Right cardiac atrium (tissue), 5 donors: ENCODE measurements at regions of chr5 and their contacts with region 1.

Region 1: GRCh38 chr5:142874537-142874936 is 104.4 kb downstream of the ARHGAP26 start:
- DNase-seq: peak; percentile 92 to 94 (median 94)
- ATAC-seq: peak; percentile 80 to 88
- H3K4me3 ChIP-seq: no peak overlapping the region
- H3K27ac ChIP-seq: peak overlapping the region; percentile 17
- H3K4me1 ChIP-seq: peaks cover 30% of the 10 kb centered on the region
- H3K27me3 ChIP-seq: no peaks in the 10 kb centered on the region

Region 2: DNA sequence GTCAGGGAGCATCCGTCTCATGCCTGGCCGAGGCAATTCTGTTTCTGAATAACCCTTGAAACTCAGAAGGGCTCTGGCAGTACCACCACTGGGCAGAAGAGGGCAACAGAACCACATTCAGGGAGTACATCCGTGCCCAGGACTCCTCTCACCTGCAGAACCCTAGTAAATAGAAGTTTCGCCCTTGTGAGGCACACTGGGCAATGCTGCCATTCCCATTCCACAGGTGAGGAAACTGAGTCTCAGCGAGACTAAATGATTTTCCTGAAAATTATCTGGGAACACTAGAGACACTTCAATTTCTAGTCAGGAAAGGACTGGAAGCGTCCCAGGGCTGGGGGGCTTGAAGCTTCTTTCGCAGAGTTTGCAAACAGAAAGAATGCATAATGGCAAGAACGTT is 263.4 kb before region 1 on chr5:
- intact Hi-C with region 1: loop called in 1 of 4 experiments (anchors 10 kb)
- DNase-seq: peak; percentile 73 to 89 (median 83)
- ATAC-seq: peak; percentile 80 to 86
- H3K4me3 ChIP-seq: no peak overlapping the region
- H3K27ac ChIP-seq: no peak overlapping the region
- H3K4me1 ChIP-seq: no peaks in the 10 kb centered on the region
- H3K27me3 ChIP-seq: no peaks in the 10 kb centered on the region

Region 3: DNA sequence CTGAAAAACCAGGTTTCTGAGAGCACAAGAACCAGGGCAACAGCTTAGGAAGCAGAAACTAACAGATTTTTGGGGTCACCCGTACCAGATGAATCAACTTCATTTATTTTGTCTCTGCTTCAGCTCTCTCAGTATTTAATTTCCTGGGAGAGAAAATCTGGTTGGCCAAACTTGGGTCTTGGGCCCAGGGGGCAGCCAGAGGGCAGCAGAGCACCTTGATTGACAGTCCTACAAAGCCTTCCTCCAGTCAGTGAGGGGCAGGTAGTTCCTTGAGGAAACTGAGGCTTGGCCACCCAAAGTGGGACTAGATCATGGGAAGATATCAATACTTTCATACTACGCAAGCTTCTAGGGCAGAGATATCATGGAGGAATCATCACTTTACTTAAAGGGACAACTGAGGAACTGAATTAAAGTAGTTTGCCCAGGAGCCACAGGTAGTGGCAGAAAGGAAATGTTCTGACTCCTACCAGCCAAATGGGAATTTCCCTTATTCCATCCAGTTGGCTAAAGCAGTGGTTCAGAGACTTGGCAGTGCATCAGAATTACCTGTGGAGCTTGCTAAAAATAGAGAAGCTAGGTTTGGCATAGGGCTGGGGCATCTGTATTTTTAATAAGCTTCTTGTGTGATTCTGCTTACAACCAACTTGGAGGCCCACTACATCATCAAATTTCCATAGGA is 125.8 kb before region 1 on chr5:
- intact Hi-C with region 1: loop called in 1 of 4 experiments (anchors 10 kb)
- DNase-seq: peak in 1 of 3 donors; percentile 65
- ATAC-seq: no peak
- H3K4me3 ChIP-seq: no peak overlapping the region
- H3K27ac ChIP-seq: no peak overlapping the region
- H3K4me1 ChIP-seq: peaks cover 21% of the 10 kb centered on the region
- H3K27me3 ChIP-seq: no peaks in the 10 kb centered on the region

Region 4: DNA sequence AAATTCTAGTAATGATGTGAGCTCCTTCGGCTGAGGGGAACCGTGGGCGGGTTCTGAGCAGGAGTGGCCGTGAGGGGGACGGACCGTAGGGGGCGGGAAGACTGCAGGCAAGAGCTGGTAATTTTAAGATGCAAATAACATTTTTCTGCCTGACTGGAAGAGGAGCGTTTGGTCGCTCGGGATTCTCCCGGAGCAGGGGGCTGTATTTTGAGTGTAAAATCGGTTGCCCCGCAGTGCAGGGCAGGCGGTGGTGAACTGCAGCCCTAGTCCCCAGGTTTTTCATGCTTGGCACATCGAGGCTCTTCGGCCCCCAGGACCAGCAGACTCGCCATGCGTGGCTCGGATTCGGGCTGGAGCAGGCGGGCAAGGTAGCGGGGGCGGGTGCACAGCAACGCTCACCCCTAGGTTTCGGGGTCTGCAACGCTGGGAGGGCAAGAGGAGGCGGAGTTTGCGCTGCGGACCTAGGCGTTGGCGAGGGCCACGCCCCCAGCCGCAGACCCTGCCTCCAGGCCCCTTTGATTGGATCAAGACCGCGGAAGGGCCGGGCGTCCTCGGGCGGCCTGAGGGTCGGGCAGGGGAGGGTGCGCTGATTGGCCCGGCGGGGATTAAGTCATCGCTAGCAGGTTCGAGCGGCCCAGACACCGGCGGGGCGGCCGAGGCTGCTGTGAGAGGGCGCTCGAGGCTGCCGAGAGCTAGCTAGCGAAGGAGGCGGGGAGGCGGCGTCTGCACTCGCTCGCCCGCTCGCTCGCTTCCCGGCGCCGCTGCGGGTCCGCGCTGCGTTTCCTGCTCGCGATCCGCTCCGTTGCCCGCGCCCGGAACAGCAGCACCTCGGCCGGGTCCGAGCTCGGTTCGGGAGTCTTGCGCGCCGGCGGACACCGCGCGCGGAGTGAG is 104.6 kb before region 1 on chr5 and contains the start of gene ARHGAP26:
- intact Hi-C with region 1: loop called (anchors 5 to 10 kb)
- DNase-seq: peak; percentile 98 to 99 (median 99)
- ATAC-seq: peak; percentile 98
- H3K4me3 ChIP-seq: peak within 1 kb of the TSS; percentile 73
- H3K27ac ChIP-seq: peak within 1 kb of the TSS; percentile 91
- H3K4me1 ChIP-seq: no peaks in the 10 kb centered on the region
- H3K27me3 ChIP-seq: no peaks in the 10 kb centered on the region
- total RNA-seq, gene ARHGAP26: 44.4 to 56.9 (median 47.8) TPM